Activated B cell treated with CpG ODN at 0.5 μM for 24 hours (primary cell): ENCODE measurements at regions of chr7 and their contacts with region 1.

Region 1: GRCh38 chr7:151472644-151473380 is 32.9 kb upstream of the CRYGN start:
- DNase-seq: no peak
- ATAC-seq: peak; percentile 38
- H3K4me3 Mint-ChIP-seq: peak overlapping the region; percentile 62
- H3K27ac Mint-ChIP-seq: peak overlapping the region; percentile 57
- H3K4me1 Mint-ChIP-seq: peaks cover 27% of the 10 kb centered on the region
- H3K27me3 Mint-ChIP-seq: no peaks in the 10 kb centered on the region
- CTCF ChIP-seq: no peak

Region 2: DNA sequence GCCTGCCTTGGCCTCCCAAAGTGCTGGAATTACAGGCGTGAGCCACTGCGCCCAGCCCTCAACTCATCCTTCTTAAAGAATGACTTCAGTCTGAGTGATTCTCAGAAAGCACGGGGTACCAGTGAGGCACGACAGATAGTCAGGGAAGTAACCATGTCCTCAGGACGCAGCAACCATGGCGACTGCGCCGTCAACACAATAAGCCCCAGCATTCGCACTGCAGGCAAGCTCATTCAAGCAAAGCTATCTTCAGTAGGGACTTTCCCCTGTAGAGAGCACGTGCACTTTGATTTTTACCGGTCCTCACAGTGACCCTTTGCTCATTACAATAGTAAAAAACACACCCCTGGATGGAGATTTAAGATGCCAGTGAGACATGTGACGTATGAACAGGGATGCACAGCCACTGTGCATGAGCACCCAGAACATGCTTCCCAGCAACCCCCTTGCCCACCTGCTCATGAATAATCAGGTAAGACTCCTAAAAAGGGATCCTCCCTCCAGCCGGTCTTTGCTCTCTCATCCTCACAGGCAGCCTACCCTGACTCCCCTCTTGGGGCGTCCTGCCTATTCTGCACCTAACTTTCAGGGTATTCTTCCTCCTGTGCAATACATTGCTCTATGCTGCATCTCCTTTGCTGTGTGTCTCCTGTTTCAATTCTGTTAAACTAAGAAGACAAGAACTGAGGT is 72.0 kb before region 1 on chr7:
- CTCF ChIA-PET with region 1: no interaction called
- POLR2A ChIA-PET with region 1: no interaction called
- intact Hi-C with region 1: loop called (anchors 2 kb)
- DNase-seq: peak; percentile 55
- ATAC-seq: peak; percentile 96
- H3K4me3 Mint-ChIP-seq: peak overlapping the region; percentile 36
- H3K27ac Mint-ChIP-seq: peak overlapping the region; percentile 81
- H3K4me1 Mint-ChIP-seq: peaks cover 26% of the 10 kb centered on the region
- H3K27me3 Mint-ChIP-seq: no peaks in the 10 kb centered on the region
- CTCF ChIP-seq: no peak

Region 3: GRCh38 chr7:151727579-151728285 is 254.9 kb after region 1 on chr7:
- CTCF ChIA-PET with region 1: no interaction called
- POLR2A ChIA-PET with region 1: no interaction called
- intact Hi-C with region 1: loop called (anchors 1 kb)
- DNase-seq: peak; percentile 44
- ATAC-seq: peak; percentile 83
- H3K4me3 Mint-ChIP-seq: peak overlapping the region; percentile 11
- H3K27ac Mint-ChIP-seq: no peak overlapping the region
- H3K4me1 Mint-ChIP-seq: peaks cover 37% of the 10 kb centered on the region
- H3K27me3 Mint-ChIP-seq: no peaks in the 10 kb centered on the region
- CTCF ChIP-seq: no peak